Aorta (tissue), 5 donors: ENCODE measurements at regions of chr16 and their contacts with region 1.

Region 1: DNA sequence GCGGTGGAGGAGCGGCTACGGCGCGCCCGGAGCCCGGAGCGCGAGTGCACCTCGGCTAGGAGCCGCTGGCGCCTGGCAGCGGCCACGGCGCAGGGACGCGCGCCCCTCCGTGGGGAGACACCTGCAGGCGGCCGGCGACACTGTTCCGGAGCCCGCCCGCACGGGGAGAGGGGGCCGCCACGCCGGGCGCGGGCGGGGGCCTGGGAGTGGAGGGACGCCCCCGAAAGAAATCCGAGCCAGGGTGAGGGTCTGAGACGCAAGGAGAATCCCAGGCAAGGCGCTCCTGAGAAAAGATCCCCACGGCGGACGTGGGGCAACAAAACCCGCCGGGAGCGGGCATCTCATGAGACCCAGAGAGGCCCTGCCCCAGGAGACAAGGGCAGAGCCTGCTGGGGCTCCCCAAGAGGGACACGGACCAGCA is at the start of gene GSG1L:
- DNase-seq: peak in 1 of 2 donors; percentile 35
- ATAC-seq: no peak
- H3K4me3 ChIP-seq: peak within 1 kb of the TSS; percentile 50 to 77
- H3K27ac ChIP-seq: no peak within 1 kb of the TSS
- H3K4me1 ChIP-seq: no peaks in the 10 kb centered on the region
- H3K27me3 ChIP-seq: no peaks in the 10 kb centered on the region
- total RNA-seq, gene GSG1L: 1.6 to 10.6 TPM

Region 2: GRCh38 chr16:27759301-27759871 is 304.3 kb before region 1 on chr16:
- intact Hi-C with region 1: loop called in 1 of 2 experiments (anchors 10 kb)
- DNase-seq: no peak
- ATAC-seq: no peak
- H3K4me3 ChIP-seq: no peak overlapping the region
- H3K27ac ChIP-seq: peak overlapping the region in 1 of 2 donors; percentile 58
- H3K4me1 ChIP-seq: peaks cover 0 to 2% of the 10 kb centered on the region in 2 donors
- H3K27me3 ChIP-seq: no peaks in the 10 kb centered on the region

Region 3: GRCh38 chr16:27779641-27780164 is 283.9 kb before region 1 on chr16:
- intact Hi-C with region 1: loop called in 1 of 2 experiments (anchors 5 kb)
- DNase-seq: peak in 1 of 2 donors; percentile 81
- ATAC-seq: no peak
- H3K4me3 ChIP-seq: no peak overlapping the region
- H3K27ac ChIP-seq: no peak overlapping the region
- H3K4me1 ChIP-seq: no peaks in the 10 kb centered on the region
- H3K27me3 ChIP-seq: no peaks in the 10 kb centered on the region

Region 4: GRCh38 chr16:27795992-27796614 is 267.5 kb before region 1 on chr16:
- intact Hi-C with region 1: loop called in 1 of 2 experiments (anchors 5 kb)
- DNase-seq: peak in 1 of 2 donors; percentile 87
- ATAC-seq: no peak
- H3K4me3 ChIP-seq: no peak overlapping the region
- H3K27ac ChIP-seq: no peak overlapping the region
- H3K4me1 ChIP-seq: no peaks in the 10 kb centered on the region
- H3K27me3 ChIP-seq: no peaks in the 10 kb centered on the region

Region 5: DNA sequence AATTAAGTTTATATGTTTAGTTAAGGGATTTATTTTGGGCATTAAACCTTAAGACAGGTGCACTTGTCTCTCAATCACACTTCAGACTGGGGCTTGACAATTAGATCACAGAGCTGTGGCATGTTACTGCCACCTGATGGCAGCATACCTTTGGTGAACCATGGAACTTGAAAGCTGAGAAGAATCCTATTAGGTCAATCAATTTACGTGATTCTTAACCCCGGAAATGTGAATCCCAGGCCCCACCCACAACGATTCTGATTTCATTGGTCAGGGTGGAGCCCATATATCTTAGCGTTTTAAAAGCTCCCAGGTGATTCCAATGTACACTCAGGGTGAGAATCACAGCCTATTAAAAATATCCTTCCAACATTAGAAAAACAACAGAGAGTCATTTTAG is 91.2 kb before region 1 on chr16:
- intact Hi-C with region 1: loop called in 1 of 2 experiments (anchors 2 kb)
- DNase-seq: no peak
- ATAC-seq: no peak
- H3K4me3 ChIP-seq: no peak overlapping the region
- H3K27ac ChIP-seq: no peak overlapping the region
- H3K4me1 ChIP-seq: no peaks in the 10 kb centered on the region
- H3K27me3 ChIP-seq: no peaks in the 10 kb centered on the region

Region 6: DNA sequence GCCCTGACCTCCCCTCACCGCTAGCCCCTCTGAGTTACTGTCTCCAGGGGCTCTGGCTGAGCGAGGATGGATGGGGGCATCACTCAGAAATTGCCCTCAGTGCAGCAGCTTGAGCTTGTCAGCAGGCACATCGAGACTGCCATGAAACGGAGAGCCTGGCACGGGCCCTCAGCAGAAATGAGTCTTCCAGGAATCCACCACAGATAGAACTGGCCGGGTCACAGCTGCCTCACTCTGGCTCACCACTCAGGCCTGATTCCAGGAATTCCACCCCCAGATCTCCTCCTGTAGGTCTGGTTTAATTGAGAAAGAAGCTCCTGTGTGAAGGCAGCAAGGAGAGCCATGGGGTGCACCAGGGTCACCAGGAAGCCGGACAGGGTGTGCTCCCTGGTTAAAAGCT is 85.7 kb before region 1 on chr16:
- intact Hi-C with region 1: loop called (anchors 2 kb)
- DNase-seq: peak in 1 of 2 donors; percentile 61
- ATAC-seq: no peak
- H3K4me3 ChIP-seq: no peak overlapping the region
- H3K27ac ChIP-seq: no peak overlapping the region
- H3K4me1 ChIP-seq: no peaks in the 10 kb centered on the region
- H3K27me3 ChIP-seq: no peaks in the 10 kb centered on the region

Region 7: DNA sequence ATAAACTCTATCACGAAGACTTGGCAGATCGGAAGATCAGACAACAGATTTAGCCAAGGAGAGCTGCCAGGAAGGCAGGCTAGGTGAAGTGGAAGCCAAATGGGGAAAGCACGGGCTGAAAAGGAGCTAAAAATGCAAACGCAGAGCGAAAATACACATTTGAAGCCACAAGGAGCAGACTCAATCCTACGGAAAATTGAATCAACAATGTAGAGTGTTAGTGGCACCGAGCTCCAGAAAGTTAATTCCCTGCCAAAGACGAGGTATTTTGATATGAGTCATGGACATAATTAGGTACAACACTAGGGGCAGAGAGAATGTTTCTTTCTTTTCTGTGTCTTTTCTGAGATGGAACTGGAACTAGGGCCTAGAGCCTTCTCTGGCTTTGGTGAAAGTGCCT is 20.8 kb before region 1 on chr16:
- intact Hi-C with region 1: loop called in 1 of 2 experiments (anchors 2 kb)
- DNase-seq: no peak
- ATAC-seq: peak; percentile 73
- H3K4me3 ChIP-seq: peak overlapping the region in 1 of 2 donors; percentile 8
- H3K27ac ChIP-seq: peak overlapping the region; percentile 94 to 95
- H3K4me1 ChIP-seq: peaks cover 0 to 2% of the 10 kb centered on the region in 2 donors
- H3K27me3 ChIP-seq: no peaks in the 10 kb centered on the region

Region 8: DNA sequence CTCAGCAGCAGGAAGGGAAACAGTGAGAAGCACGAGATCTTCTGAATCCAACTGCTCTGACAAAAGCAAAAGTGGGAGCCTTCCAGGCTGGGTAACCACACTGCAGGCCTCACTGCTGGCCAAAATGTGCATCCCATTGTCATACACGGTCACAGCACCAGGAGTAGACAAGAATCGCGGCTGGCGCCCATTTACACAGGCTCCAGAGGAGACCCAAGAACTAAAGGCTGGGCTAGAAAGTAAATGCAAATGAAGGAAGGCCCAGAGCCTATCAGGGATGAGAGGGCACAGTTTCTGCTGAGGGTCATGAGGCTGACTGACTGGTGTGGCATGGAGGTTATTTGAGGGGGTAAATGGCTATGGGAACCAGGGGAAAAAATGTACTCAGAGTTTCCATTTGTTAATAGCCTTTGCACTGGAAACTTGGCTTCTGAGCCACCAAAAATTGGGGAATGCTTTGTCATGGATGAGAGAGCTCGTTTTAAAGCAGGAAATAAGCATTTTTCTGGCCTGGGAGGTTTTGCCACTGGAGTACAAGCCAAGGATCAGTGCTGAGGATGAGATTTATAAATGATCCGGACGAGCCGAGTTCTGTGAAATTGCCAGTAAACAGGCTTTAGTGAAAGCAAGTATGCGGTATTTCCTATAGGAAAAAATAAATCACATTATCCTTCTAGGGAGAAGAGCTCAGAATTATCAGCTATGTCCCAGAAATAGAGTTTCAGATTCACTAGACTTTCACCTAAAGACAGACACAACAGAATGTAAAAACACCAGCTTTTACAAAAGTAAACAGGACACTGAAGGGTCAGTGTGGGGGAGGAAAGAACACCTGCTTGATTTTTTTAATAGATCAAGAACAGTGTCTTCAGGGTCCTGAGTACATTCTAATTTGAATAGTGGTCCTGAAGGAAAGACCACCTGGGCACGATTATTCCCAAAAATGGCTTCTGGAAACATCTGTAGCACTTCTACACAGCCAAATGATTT is 66.7 kb after region 1 on chr16:
- intact Hi-C with region 1: no loop called
- DNase-seq: no peak
- ATAC-seq: peak; percentile 81
- H3K4me3 ChIP-seq: no peak overlapping the region
- H3K27ac ChIP-seq: peak overlapping the region; percentile 29 to 56
- H3K4me1 ChIP-seq: no peaks in the 10 kb centered on the region
- H3K27me3 ChIP-seq: no peaks in the 10 kb centered on the region

Region 9: DNA sequence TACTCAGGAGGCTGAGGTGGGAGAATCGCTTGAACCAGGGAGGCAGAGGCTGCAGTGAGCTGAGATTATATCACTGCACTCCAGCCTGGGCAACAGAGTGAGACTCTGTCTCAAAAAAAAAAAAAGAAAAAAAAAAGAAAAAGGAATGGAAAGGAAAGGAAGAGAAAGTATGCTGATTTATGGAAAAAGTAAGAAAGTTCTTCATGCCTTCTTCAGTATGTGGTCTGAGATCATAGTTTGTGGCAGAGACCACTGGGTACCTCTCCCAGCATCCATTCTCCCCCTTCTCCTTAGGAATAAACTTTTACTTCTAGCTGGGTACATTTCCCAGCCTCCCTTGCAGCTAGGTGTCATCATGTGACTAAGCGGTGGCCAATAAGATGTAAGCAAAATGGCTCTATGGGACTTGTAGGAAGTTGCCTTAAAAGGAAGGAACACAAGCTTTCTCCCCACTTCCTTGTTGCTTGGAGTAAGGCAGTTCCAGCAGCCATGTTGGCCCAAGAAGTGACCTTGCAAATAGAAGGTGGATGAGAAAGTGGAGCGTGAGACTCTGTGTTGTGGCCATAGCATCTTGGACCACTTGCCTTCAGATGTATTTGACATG is 174.2 kb after region 1 on chr16:
- intact Hi-C with region 1: no loop called
- DNase-seq: no peak
- ATAC-seq: no peak
- H3K4me3 ChIP-seq: no peak overlapping the region
- H3K27ac ChIP-seq: no peak overlapping the region
- H3K4me1 ChIP-seq: no peaks in the 10 kb centered on the region
- H3K27me3 ChIP-seq: no peaks in the 10 kb centered on the region

Region 10: GRCh38 chr16:28898266-28898665 is 834.6 kb after region 1 on chr16:
- intact Hi-C with region 1: no loop called
- DNase-seq: no peak
- ATAC-seq: no peak
- H3K4me3 ChIP-seq: no peak overlapping the region
- H3K27ac ChIP-seq: no peak overlapping the region
- H3K4me1 ChIP-seq: no peaks in the 10 kb centered on the region
- H3K27me3 ChIP-seq: no peaks in the 10 kb centered on the region